Adrenal gland (tissue), 19 donors: ENCODE measurements at regions of chr11 and their contacts with region 1.

Region 1: GRCh38 chr11:4072668-4073285 is 21.8 kb upstream of the RRM1 start:
- DNase-seq: peak; percentile 60 to 85 (median 65)
- H3K4me3 ChIP-seq: no peak overlapping the region
- H3K27ac ChIP-seq: no peak overlapping the region
- H3K4me1 ChIP-seq: no peaks in the 10 kb centered on the region
- H3K27me3 ChIP-seq: no peaks in the 10 kb centered on the region
- CTCF ChIP-seq: peak; percentile 65 to 97 (median 94)
- POLR2A ChIP-seq: no peak

Region 2: DNA sequence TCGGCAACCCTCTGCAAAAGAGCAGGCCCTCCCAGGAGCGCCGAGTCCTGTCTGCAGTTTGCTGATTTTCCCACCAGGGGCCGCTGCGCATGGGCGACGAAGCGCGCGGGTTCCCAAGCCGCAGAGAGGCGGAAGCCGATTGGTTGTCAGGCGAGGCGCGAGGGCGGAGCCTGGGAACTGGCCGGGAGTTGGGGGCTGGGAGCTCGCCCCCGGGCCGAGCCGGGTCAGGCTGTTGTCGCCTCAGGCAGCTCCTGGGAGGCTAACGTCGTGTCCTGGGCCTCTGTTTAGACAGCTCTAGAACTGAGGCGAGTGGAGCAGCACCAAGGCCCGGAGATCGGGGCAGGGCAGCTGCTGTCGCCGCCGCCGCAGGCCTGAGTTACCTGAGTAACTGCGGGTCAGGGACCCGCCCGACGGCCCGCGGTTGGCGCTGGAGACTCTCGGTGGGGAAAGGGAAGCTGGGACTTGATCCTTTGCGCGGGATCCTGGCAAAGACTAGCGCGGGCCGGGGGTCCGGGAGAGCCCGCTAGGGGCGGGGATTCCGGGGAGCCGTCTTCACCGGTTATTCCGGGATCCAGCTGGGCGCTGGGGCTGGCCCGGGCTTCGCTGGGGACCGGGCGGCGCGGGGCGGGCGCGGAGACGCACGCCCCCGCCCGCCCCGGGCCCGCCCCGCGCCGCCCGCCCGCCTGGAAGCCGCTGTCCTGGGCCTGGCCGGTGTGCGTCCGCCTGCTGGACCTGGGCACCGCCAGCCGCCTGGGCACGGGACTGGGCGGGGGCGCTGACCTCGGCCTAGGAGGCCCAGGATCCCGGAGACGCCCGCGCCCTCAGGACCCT is 217.6 kb before region 1 on chr11 and contains the start of gene STIM1:
- intact Hi-C with region 1: loop called (anchors 5 kb)
- DNase-seq: peak; percentile 92 to 97 (median 94)
- H3K4me3 ChIP-seq: peak within 1 kb of the TSS; percentile 83 to 98 (median 94)
- H3K27ac ChIP-seq: peak within 1 kb of the TSS; percentile 92 to 100 (median 95)
- H3K4me1 ChIP-seq: peaks cover 30 to 51% of the 10 kb centered on the region in 2 donors
- H3K27me3 ChIP-seq: no peaks in the 10 kb centered on the region
- CTCF ChIP-seq: peak; percentile 96 to 99 (median 98)
- POLR2A ChIP-seq: peak; percentile 48 to 65
- total RNA-seq, gene STIM1: 7.8 to 44.1 (median 34.4) TPM